ENCODE measurements at regions of chr5 and their contacts with region 1.

Region 1: GRCh38 chr5:61331407-61332357 is at the start of gene ZSWIM6:
- DNase-seq: peak; percentile 99
- ATAC-seq: peak; percentile 90
- H3K4me3 Mint-ChIP-seq: peak within 1 kb of the TSS; percentile 79
- H3K27ac Mint-ChIP-seq: peak within 1 kb of the TSS; percentile 84
- H3K4me1 Mint-ChIP-seq: peaks cover 41% of the 10 kb centered on the region
- H3K27me3 Mint-ChIP-seq: peaks cover 25% of the 10 kb centered on the region
- total RNA-seq, gene ZSWIM6: 4.5 to 5.7 TPM

Region 2: GRCh38 chr5:60972231-60972630 is 359.5 kb before region 1 on chr5:
- CTCF ChIA-PET with region 1: no interaction called
- POLR2A ChIA-PET with region 1: no interaction called
- intact Hi-C with region 1: loop called in 1 of 2 experiments (anchors 5 kb)
- DNase-seq: peak; percentile 75
- ATAC-seq: peak; percentile 100
- H3K4me3 Mint-ChIP-seq: no peak overlapping the region
- H3K27ac Mint-ChIP-seq: peak overlapping the region; percentile 6
- H3K4me1 Mint-ChIP-seq: peaks cover 19% of the 10 kb centered on the region
- H3K27me3 Mint-ChIP-seq: no peaks in the 10 kb centered on the region

Region 3: GRCh38 chr5:61200582-61201155 is 131.0 kb before region 1 on chr5:
- CTCF ChIA-PET with region 1: no interaction called
- POLR2A ChIA-PET with region 1: no interaction called
- intact Hi-C with region 1: loop called (anchors 1 to 10 kb)
- DNase-seq: no peak
- ATAC-seq: no peak
- H3K4me3 Mint-ChIP-seq: no peak overlapping the region
- H3K27ac Mint-ChIP-seq: no peak overlapping the region
- H3K4me1 Mint-ChIP-seq: peaks cover 14% of the 10 kb centered on the region
- H3K27me3 Mint-ChIP-seq: peaks cover 39% of the 10 kb centered on the region

Region 4: GRCh38 chr5:61408476-61409168 is 76.9 kb after region 1 on chr5:
- CTCF ChIA-PET with region 1: no interaction called
- POLR2A ChIA-PET with region 1: interaction called, 7 read pairs
- intact Hi-C with region 1: loop called (anchors 1 kb)
- DNase-seq: peak; percentile 99
- ATAC-seq: peak; percentile 99
- H3K4me3 Mint-ChIP-seq: peak overlapping the region; percentile 59
- H3K27ac Mint-ChIP-seq: peak overlapping the region; percentile 51
- H3K4me1 Mint-ChIP-seq: peaks cover 31% of the 10 kb centered on the region
- H3K27me3 Mint-ChIP-seq: no peaks in the 10 kb centered on the region

Region 5: GRCh38 chr5:61423487-61424145 is 91.9 kb after region 1 on chr5:
- CTCF ChIA-PET with region 1: no interaction called
- POLR2A ChIA-PET with region 1: no interaction called
- intact Hi-C with region 1: no loop called
- DNase-seq: no peak
- ATAC-seq: no peak
- H3K4me3 Mint-ChIP-seq: no peak overlapping the region
- H3K27ac Mint-ChIP-seq: no peak overlapping the region
- H3K4me1 Mint-ChIP-seq: peaks cover 20% of the 10 kb centered on the region
- H3K27me3 Mint-ChIP-seq: no peaks in the 10 kb centered on the region

Region 6: DNA sequence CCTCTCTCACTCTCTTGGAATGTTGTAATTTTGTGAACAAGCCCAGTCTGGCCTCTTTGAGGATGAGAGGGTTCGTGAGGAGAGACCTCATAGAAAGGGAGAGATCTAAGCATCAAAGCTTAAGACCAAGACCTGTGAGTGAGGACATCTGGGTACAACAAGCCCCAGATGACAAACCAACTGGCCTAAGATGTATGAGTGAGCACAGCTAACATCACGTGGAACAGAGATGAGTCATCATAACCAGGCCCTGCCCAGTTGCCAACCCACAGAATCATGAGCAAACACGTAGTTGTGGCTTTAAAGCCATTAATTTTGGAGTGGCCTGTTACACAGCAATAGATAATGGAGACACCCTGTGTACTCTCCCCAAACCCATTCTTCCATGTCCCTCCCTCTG is 535.2 kb after region 1 on chr5:
- CTCF ChIA-PET with region 1: no interaction called
- POLR2A ChIA-PET with region 1: no interaction called
- intact Hi-C with region 1: no loop called
- DNase-seq: peak; percentile 7
- ATAC-seq: peak; percentile 70
- H3K4me3 Mint-ChIP-seq: no peak overlapping the region
- H3K27ac Mint-ChIP-seq: no peak overlapping the region
- H3K4me1 Mint-ChIP-seq: no peaks in the 10 kb centered on the region
- H3K27me3 Mint-ChIP-seq: peaks cover 4% of the 10 kb centered on the region

Region 7: GRCh38 chr5:62305715-62306322 is 974.1 kb after region 1 on chr5 and contains the start of gene KIF2A:
- CTCF ChIA-PET with region 1: no interaction called
- POLR2A ChIA-PET with region 1: no interaction called
- intact Hi-C with region 1: loop called (anchors 5 kb)
- DNase-seq: peak; percentile 96
- ATAC-seq: peak; percentile 89
- H3K4me3 Mint-ChIP-seq: peak within 1 kb of the TSS; percentile 94
- H3K27ac Mint-ChIP-seq: peak within 1 kb of the TSS; percentile 99
- H3K4me1 Mint-ChIP-seq: peaks cover 54% of the 10 kb centered on the region
- H3K27me3 Mint-ChIP-seq: no peaks in the 10 kb centered on the region
- total RNA-seq, gene KIF2A: 224 to 306 TPM

Measured in activated CD4-positive, alpha-beta T cell treated with anti-CD3 and anti-CD28 coated beads for 36 hours (primary cell).